ENCODE measurements at regions of chr3 and their contacts with region 1.

Region 1: GRCh38 chr3:39378088-39378487 is 5.1 kb upstream of the SLC25A38 start:
- DNase-seq: peak; percentile 59
- ATAC-seq: peak; percentile 88
- H3K4me3 ChIP-seq: no peak overlapping the region
- H3K27ac ChIP-seq: no peak overlapping the region
- H3K4me1 ChIP-seq: peaks cover 22% of the 10 kb centered on the region
- H3K27me3 ChIP-seq: 0 out of 5 replicates have a peak, but pooled peaks cover 0 to 1% of the 10 kb centered on the region in 2 experiments
- CTCF ChIP-seq: peak; percentile 87
- EP300 ChIP-seq: no peak
- POLR2A ChIP-seq: no peak
- RAD21 ChIP-seq: peak; percentile 73

Region 2: DNA sequence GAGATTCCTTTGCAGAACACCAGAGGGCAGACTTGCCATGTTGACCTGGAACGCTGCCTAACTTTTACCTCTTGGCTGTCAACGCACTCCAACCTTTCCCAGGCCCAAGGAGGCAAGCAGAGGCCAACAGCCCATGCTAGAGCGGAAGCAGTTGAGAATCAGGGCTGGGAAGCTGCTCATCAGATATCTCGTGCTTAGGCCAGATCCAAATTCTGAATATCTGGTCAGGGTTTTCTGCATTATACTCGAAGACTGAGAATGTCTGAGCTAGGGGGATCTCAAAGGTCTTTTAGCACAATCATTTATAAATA is 188.2 kb before region 1 on chr3:
- CTCF ChIA-PET with region 1: interaction called, 10 read pairs
- POLR2A ChIA-PET with region 1: no interaction called
- in situ Hi-C with region 1: loop called (anchors 10 kb)
- intact Hi-C with region 1: loop called (anchors 1 kb)
- DNase-seq: peak; percentile 52
- ATAC-seq: peak; percentile 75
- H3K4me3 ChIP-seq: no peak overlapping the region
- H3K27ac ChIP-seq: no peak overlapping the region
- H3K4me1 ChIP-seq: no peaks in the 10 kb centered on the region
- H3K27me3 ChIP-seq: peaks cover 3 to 28% of the 10 kb centered on the region in 2 experiments; a peak in 4 of 5 replicates
- CTCF ChIP-seq: peak; percentile 89
- EP300 ChIP-seq: no peak
- POLR2A ChIP-seq: no peak
- RAD21 ChIP-seq: peak; percentile 78

Region 3: GRCh38 chr3:39317571-39318169 is 60.4 kb before region 1 on chr3:
- CTCF ChIA-PET with region 1: no interaction called
- POLR2A ChIA-PET with region 1: no interaction called
- in situ Hi-C with region 1: no loop called
- intact Hi-C with region 1: loop called (anchors 2 kb)
- DNase-seq: peak; percentile 95
- ATAC-seq: peak; percentile 99
- H3K4me3 ChIP-seq: no peak overlapping the region; a peak in 1 of 6 replicates
- H3K27ac ChIP-seq: peak overlapping the region; percentile 59
- H3K4me1 ChIP-seq: peaks cover 27% of the 10 kb centered on the region
- H3K27me3 ChIP-seq: no peaks in the 10 kb centered on the region
- CTCF ChIP-seq: peak; percentile 37; the same call in 1 of the 2 replicates
- EP300 ChIP-seq: peak; percentile 74 to 91; a peak in 3 of 4 replicates
- POLR2A ChIP-seq: no peak
- RAD21 ChIP-seq: 0 out of 2 replicates have a peak, but pooled peaks have one; percentile 10